Caco-2 (cell line): ENCODE measurements at regions of chr3 and their contacts with region 1.

Region 1: GRCh38 chr3:56339671-56340070 is 128.6 kb downstream of the ERC2 start:
- DNase-seq: no peak
- H3K4me3 ChIP-seq: no peak overlapping the region
- H3K4me3 Mint-ChIP-seq: no peak overlapping the region
- H3K27ac Mint-ChIP-seq: no peak overlapping the region
- H3K4me1 ChIP-seq: no peaks in the 10 kb centered on the region
- H3K4me1 Mint-ChIP-seq: no peaks in the 10 kb centered on the region
- H3K27me3 ChIP-seq: no peaks in the 10 kb centered on the region
- H3K27me3 Mint-ChIP-seq: no peaks in the 10 kb centered on the region
- CTCF ChIP-seq: no peak

Region 2: DNA sequence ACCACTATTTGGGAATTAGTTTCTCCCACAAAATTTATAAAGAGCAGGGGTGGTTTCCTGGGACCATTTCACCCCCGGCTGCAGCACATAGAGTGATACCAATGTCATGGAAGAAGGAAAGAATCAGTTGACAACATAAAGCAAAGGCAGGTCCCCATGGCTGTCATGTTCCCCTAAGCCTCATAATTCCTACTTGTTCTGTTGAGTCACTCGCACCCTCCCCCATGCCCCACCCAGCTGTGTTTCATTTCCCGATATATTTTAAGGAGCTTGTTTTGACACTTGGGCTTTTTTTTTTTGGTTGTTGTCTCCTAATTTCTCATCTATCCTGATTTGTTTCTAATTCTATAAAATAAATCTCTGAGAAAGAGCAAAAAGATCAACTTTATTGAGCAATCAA is 103.7 kb after region 1 on chr3:
- CTCF ChIA-PET with region 1: no interaction called
- POLR2A ChIA-PET with region 1: no interaction called
- intact Hi-C with region 1: loop called (anchors 1 kb)
- DNase-seq: no peak
- H3K4me3 ChIP-seq: no peak overlapping the region
- H3K4me3 Mint-ChIP-seq: no peak overlapping the region
- H3K27ac Mint-ChIP-seq: no peak overlapping the region
- H3K4me1 ChIP-seq: no peaks in the 10 kb centered on the region
- H3K4me1 Mint-ChIP-seq: peaks cover 6% of the 10 kb centered on the region
- H3K27me3 ChIP-seq: no peaks in the 10 kb centered on the region
- H3K27me3 Mint-ChIP-seq: peaks cover 16% of the 10 kb centered on the region
- CTCF ChIP-seq: no peak

Region 3: DNA sequence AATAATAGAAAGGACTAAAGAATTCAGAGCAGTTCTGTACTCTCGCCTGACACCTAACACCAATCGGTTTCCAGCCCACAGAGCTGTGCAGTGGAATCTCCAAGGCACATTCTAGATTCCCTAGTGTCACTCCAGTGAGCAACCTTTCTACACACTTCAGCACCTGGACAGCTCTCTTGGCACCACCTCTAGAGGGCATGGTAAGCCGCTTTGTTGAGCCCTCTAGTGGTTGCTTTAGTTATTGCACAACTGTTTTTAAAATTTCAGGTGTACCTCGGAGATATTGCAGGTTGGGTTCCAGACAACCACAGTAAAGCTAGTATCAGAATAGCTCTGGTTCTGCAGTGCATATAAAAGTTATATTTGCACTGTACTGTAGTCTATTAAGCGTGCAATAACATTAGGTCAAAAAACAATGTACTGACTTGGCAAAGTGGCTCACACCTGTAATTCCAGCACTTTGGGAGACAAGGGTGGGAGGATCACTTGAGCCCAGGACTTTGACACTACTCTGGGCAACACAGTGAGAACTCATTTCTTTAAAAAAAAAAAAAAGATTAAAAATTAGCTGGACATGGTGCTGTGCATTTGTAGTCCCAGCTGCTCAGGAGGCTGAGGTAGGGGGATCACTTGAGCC is 155.1 kb after region 1 on chr3:
- CTCF ChIA-PET with region 1: interaction called, 3 read pairs
- POLR2A ChIA-PET with region 1: no interaction called
- intact Hi-C with region 1: loop called (anchors 1 kb)
- DNase-seq: peak; percentile 87 to 88
- H3K4me3 ChIP-seq: no peak overlapping the region
- H3K4me3 Mint-ChIP-seq: no peak overlapping the region
- H3K27ac Mint-ChIP-seq: no peak overlapping the region
- H3K4me1 ChIP-seq: no peaks in the 10 kb centered on the region
- H3K4me1 Mint-ChIP-seq: no peaks in the 10 kb centered on the region
- H3K27me3 ChIP-seq: no peaks in the 10 kb centered on the region
- H3K27me3 Mint-ChIP-seq: peaks cover 22% of the 10 kb centered on the region
- CTCF ChIP-seq: peak; percentile 88 to 99